A549 (cell line): ENCODE measurements at regions of chr1 and their contacts with region 1.

Region 1: GRCh38 chr1:152189657-152190442 is 30.8 kb upstream of the RPTN start:
- DNase-seq: peak; percentile 70 to 83
- ATAC-seq: peak; percentile 62 to 79
- H3K4me3 ChIP-seq: peak overlapping the region; percentile 80
- H3K27ac ChIP-seq: peak overlapping the region; percentile 88 to 89
- H3K4me1 ChIP-seq: peaks cover 14% of the 10 kb centered on the region
- CTCF ChIP-seq: peak; percentile 89
- EP300 ChIP-seq: no peak
- POLR2A ChIP-seq: no peak
- RAD21 ChIP-seq: peak; percentile 82 to 85

Region 2: GRCh38 chr1:151934048-151934493 is 255.8 kb before region 1 on chr1:
- CTCF ChIA-PET with region 1: interaction called, 10 read pairs
- POLR2A ChIA-PET with region 1: no interaction called
- DNase-seq: peak; percentile 54 to 76
- ATAC-seq: peak; percentile 94 to 97
- H3K4me3 ChIP-seq: no peak overlapping the region
- H3K27ac ChIP-seq: peak overlapping the region in 1 of 2 experiments; percentile 43; a peak in 1 of 6 replicates
- H3K4me1 ChIP-seq: peaks cover 33% of the 10 kb centered on the region
- CTCF ChIP-seq: peak; percentile 98
- EP300 ChIP-seq: no peak
- POLR2A ChIP-seq: no peak
- RAD21 ChIP-seq: peak; percentile 98 to 99

Region 3: DNA sequence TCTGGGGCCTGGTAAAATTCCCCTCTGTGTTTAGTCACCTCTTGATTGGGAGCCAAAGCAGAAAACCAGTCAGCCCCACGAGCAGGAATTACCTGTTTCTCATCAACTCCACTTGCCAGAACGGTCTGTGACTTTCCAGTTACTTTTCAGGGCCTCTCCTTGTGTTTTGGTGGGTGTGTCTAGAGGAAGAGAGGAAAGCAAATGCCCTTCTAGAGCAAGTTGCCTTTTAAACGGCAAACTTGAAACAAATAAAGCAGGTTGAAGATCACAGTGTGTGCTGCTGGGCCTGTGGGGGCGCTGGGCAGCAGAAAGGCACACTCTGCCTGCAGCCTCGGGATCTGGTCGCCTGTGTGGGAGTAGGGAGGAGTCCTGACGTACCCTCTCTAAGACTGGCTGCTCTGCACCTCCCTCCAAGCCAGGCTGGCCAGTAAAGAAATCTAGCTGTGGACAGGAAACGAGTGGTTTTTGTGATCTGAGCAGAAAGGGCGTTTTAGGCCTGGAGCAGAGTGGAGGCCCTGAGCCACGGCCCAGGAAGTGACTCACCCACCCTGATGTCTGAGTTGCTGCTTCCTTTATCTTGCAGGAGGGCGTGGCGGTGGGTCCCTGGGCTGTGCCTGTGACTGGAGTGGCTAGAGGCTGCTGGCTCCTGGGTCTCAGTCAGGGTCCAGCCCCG is 142.0 kb before region 1 on chr1:
- CTCF ChIA-PET with region 1: interaction called, 231 read pairs
- POLR2A ChIA-PET with region 1: interaction called, 8 read pairs
- DNase-seq: peak; percentile 83 to 100
- ATAC-seq: peak; percentile 95
- H3K4me3 ChIP-seq: peak overlapping the region; percentile 43
- H3K27ac ChIP-seq: peak overlapping the region; percentile 95 to 96
- H3K4me1 ChIP-seq: peaks cover 45% of the 10 kb centered on the region
- CTCF ChIP-seq: peak; percentile 57; the same call in 2 of the 3 replicates
- EP300 ChIP-seq: no peak; a peak in 1 of 5 replicates
- POLR2A ChIP-seq: peak; percentile 66
- RAD21 ChIP-seq: peak; percentile 32 to 45; a peak in 4 of 5 replicates

Region 4: DNA sequence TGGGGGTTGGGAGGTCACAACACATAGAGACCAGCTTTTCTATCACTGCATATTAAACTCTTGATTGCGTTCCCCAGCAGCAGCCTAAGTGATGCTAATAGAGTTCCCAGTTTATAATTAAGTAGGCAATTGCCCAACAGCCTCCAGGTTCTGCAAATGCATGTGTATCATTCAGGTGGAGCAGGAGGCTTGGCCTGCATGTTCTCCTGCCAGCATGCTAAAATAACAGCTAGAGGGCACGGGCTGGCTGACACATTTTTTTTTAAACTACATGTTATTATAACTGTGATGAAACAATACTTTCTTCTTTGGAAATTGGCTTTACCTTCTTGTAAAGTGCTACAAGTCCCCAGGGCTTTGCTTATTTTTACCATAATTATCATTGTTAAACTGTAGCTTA is 85.0 kb before region 1 on chr1:
- CTCF ChIA-PET with region 1: interaction called, 89 read pairs
- POLR2A ChIA-PET with region 1: interaction called, 6 read pairs
- DNase-seq: no peak
- ATAC-seq: no peak
- H3K4me3 ChIP-seq: no peak overlapping the region
- H3K27ac ChIP-seq: no peak overlapping the region
- H3K4me1 ChIP-seq: peaks cover 17% of the 10 kb centered on the region
- CTCF ChIP-seq: no peak
- EP300 ChIP-seq: no peak
- POLR2A ChIP-seq: no peak
- RAD21 ChIP-seq: no peak

Region 5: DNA sequence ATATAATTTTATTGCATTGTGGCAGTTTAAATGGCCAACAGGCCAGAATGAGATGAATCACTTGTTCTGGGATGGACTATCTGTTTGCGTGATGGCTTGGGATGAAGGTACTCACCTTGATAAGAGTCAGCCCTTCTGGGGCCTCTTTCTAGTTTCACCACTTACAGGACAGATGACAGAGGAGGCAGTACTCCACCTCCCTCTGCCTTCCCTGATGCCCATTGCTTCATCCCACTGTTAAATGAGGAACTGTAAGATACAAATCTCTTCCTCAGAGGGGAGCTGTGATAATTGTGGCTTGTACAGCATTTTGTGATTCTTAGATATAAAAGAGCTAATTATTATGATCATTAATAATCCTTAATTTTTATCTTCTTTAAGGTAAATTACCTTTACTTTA is 70.9 kb before region 1 on chr1:
- CTCF ChIA-PET with region 1: interaction called, 89 read pairs
- POLR2A ChIA-PET with region 1: no interaction called
- DNase-seq: no peak
- ATAC-seq: no peak
- H3K4me3 ChIP-seq: no peak overlapping the region
- H3K27ac ChIP-seq: no peak overlapping the region
- H3K4me1 ChIP-seq: no peaks in the 10 kb centered on the region
- CTCF ChIP-seq: no peak
- EP300 ChIP-seq: no peak
- POLR2A ChIP-seq: no peak
- RAD21 ChIP-seq: no peak

Region 6: DNA sequence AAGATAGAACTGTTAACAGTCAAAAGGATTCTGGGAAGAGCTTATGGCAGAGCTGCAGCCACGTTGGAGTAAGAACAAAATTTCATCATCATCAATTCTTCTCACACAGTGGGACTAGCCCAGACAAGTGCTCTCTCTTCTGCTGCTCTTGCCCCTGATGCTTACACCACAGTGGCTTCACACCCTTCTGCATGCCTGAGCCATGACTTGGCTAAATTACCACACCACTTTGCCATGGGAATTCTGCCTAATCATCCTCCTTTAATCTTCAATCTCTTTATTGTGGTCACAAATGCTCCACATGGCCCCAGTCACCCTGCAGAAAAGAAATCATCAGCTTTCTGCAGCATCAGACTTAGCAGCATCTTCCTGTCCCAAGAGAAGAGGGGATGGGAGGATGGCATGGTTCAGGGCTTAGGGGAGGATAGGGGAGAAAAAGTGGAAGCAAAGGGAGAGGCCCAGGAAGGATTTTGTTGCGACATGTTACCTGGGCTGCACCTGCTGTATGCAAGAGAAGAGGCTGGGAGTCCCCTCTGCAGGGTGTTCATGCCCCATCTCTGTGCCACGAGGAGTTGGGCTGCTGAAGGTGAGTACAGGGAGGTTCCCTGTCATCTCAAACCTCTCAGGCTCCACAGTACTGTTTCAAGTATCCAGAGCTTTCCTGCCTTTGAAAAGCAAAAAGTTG is 21.9 kb before region 1 on chr1:
- CTCF ChIA-PET with region 1: interaction called, 291 read pairs
- POLR2A ChIA-PET with region 1: interaction called, 3 read pairs
- DNase-seq: peak in 1 of 2 experiments; percentile 80
- ATAC-seq: peak; percentile 65 to 76; a peak in 5 of 6 replicates
- H3K4me3 ChIP-seq: no peak overlapping the region
- H3K27ac ChIP-seq: peak overlapping the region; percentile 80 to 84
- H3K4me1 ChIP-seq: peaks cover 38% of the 10 kb centered on the region
- CTCF ChIP-seq: no peak
- EP300 ChIP-seq: peak; percentile 65 to 69; a peak in 4 of 5 replicates
- POLR2A ChIP-seq: no peak
- RAD21 ChIP-seq: no peak

Region 7: GRCh38 chr1:152451254-152451653 is 261.4 kb after region 1 on chr1:
- CTCF ChIA-PET with region 1: interaction called, 15 read pairs
- POLR2A ChIA-PET with region 1: no interaction called
- DNase-seq: no peak
- ATAC-seq: peak; percentile 70 to 77; a peak in 4 of 6 replicates
- H3K4me3 ChIP-seq: no peak overlapping the region
- H3K27ac ChIP-seq: no peak overlapping the region
- H3K4me1 ChIP-seq: no peaks in the 10 kb centered on the region
- CTCF ChIP-seq: no peak
- EP300 ChIP-seq: no peak
- POLR2A ChIP-seq: no peak
- RAD21 ChIP-seq: 0 out of 5 replicates have a peak, but pooled peaks of 1 of the 2 experiments have one; percentile 16